G401 (cell line): ENCODE measurements at regions of chr6 and their contacts with region 1.

Region 1: GRCh38 chr6:42043787-42044475 is 6.4 kb upstream of the TAF8 start:
- DNase-seq: peak; percentile 88

Region 2: DNA sequence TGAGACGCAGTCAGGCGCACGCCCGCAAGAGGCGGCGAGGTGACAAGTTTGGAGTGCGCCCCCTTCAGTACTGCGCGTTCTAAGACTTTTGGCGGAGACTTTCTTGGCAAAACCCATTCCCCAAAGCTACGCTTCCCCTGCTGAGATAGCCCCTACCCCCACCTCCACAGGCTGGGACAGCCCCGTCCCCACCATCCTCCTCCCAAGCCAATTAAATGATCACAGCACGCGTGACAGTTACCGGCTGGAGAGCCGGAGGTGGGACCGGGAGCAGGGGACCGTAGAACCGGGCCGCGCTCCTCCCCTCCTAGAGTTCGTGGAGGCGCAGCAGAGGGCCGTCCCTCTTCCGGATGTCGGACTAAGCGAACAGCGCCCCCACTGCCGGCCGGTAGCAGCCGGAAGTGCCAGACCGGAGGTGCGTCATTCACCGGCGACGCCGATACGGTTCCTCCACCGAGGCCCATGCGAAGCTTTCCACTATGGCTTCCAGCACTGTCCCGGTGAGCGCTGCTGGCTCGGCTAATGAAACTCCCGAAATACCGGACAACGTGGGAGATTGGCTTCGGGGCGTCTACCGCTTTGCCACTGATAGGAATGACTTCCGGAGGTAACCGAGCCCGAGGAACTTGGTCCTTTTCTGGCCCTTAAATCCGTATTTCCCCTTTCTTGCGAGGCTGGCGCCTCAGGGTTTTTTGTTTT is 256.6 kb before region 1 on chr6 and contains the start of gene TOMM6:
- in situ Hi-C with region 1: loop called (anchors 25 kb)
- DNase-seq: peak; percentile 91
- total RNA-seq, gene TOMM6: 199 and 283 TPM in 2 replicates

Region 3: GRCh38 chr6:41836022-41836659 is 207.8 kb before region 1 on chr6:
- in situ Hi-C with region 1: no loop called
- DNase-seq: no peak

Region 4: DNA sequence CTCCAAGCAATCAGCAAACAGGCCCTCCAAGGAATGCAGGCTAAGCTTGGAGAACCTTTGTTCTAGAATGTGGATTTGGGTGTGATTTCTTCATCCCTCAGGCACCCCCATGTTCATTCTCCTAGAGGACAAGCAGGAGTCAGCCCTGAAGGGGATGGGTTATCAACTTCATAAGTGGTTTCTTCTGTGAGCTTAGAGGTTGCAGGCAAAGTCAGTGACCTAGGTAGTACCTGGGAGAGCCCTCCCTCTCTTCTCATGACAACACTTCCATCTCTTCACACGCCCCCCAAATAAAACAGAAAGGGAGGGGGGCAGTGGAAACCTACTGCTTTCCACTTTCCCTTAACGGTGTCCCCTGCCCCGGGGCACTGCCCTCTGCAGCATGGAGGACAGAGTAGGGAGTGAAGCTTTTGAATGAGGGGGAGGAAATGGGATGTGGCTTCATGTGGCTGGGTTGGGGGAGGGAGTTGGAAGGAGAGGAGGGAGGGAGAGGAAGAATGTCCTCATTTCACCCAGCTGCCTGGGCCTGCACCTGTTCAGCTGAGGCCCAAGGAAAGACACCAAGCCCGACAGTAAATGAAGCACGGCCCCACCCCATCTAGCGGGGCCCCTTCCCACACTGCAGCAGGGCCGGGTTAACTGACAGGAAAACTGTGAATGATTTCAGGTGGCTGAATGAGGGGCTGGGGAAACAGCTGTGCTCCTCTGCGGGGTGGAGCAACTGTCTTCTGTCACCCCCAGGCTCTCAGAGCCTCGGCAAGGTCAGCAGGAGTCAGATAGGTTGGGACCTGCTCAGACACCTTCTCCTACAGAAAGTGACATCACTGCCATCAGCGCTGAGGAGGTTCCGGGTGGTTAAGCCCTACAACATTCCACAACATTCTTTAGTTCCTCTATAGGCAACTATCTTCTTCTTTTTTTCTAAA is 33.7 kb before region 1 on chr6:
- in situ Hi-C with region 1: no loop called
- DNase-seq: no peak

Region 5: GRCh38 chr6:42099340-42100028 is 55.6 kb after region 1 on chr6:
- in situ Hi-C with region 1: no loop called
- DNase-seq: no peak

Region 6: GRCh38 chr6:42352856-42353564 is 309.1 kb after region 1 on chr6:
- in situ Hi-C with region 1: no loop called
- DNase-seq: no peak